Panc1 (cell line): ENCODE measurements at regions of chr13 and their contacts with region 1.

Region 1: DNA sequence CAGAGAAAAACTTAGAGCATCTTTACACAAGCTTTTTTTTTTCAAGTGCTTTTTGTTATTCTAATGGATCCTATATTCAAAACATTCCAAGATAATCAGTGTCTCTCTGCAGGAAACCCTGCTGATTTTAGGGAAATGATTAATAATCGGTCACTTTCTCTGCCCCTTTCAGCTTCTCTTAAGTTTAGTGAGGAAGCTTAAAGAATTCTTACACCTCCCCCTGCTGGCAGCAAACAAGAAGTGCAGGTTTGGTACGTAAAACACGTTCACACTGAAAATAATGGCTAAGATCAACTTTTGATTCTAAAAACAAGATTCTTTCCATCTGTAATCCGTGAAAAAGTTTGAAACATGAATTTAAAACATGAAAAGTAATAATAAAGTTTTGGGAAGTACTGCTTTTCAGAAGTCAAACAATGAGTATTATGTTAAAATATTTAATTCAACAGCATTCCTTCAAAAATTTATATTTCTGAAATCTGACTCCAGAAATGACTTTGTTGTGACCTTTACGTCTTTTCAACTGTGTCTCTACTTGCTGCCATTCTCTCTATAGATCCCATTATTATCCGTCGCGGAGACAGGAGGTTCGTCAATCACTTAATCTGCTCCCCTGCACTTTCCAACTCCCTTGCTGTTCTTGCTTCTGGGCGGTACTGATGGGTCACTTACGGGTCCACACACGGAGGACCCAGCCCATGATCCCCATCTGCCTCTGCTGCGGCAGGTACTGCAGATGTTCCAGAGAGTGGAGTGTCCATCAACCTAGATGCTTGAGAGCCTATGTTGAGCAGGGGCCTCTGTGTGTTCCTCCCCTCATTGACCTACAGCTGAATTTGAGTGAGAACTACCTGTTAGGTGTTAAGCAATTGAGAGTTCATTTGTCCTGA is 203.1 kb upstream of the EDNRB start:
- DNase-seq: no peak
- ATAC-seq: no peak
- H3K4me3 ChIP-seq: no peak overlapping the region
- H3K27ac ChIP-seq: no peak overlapping the region
- H3K4me1 ChIP-seq: no peaks in the 10 kb centered on the region
- H3K27me3 ChIP-seq: no peaks in the 10 kb centered on the region
- CTCF ChIP-seq: peak; percentile 63; the same call in 1 of the 2 replicates

Region 2: GRCh38 chr13:77779552-77780272 is 342.0 kb before region 1 on chr13:
- CTCF ChIA-PET with region 1: no interaction called
- POLR2A ChIA-PET with region 1: no interaction called
- in situ Hi-C with region 1: no loop called
- intact Hi-C with region 1: loop called (anchors 1 kb)
- DNase-seq: peak; percentile 8
- ATAC-seq: no peak
- H3K4me3 ChIP-seq: no peak overlapping the region
- H3K27ac ChIP-seq: no peak overlapping the region
- H3K4me1 ChIP-seq: no peaks in the 10 kb centered on the region
- H3K27me3 ChIP-seq: no peaks in the 10 kb centered on the region
- CTCF ChIP-seq: peak; percentile 55; the same call in 1 of the 2 replicates

Region 3: DNA sequence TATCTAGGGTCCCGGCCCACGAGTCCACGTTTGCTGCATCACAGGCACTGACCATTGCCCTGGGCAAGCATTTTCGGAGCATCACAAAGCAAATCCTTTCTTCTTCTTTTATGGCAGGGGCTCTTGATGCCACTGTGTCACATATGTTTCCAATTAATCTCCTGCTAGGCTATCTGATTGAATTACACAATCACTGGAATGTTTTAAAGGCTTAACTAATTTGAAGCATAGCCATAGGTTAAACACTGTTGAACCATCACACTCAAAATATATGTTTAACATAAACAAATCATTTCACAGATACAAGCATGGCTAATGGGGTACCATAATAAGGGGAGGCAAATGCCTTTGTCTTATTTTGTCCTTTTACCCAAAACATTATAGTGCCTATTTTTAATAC is 143.4 kb after region 1 on chr13:
- CTCF ChIA-PET with region 1: no interaction called
- POLR2A ChIA-PET with region 1: no interaction called
- in situ Hi-C with region 1: no loop called
- intact Hi-C with region 1: no loop called
- DNase-seq: no peak
- ATAC-seq: no peak
- H3K4me3 ChIP-seq: no peak overlapping the region
- H3K27ac ChIP-seq: no peak overlapping the region
- H3K4me1 ChIP-seq: no peaks in the 10 kb centered on the region
- H3K27me3 ChIP-seq: no peaks in the 10 kb centered on the region
- CTCF ChIP-seq: no peak